H1 (cell line): ENCODE measurements at regions of chr2 and their contacts with region 1.

Region 1: DNA sequence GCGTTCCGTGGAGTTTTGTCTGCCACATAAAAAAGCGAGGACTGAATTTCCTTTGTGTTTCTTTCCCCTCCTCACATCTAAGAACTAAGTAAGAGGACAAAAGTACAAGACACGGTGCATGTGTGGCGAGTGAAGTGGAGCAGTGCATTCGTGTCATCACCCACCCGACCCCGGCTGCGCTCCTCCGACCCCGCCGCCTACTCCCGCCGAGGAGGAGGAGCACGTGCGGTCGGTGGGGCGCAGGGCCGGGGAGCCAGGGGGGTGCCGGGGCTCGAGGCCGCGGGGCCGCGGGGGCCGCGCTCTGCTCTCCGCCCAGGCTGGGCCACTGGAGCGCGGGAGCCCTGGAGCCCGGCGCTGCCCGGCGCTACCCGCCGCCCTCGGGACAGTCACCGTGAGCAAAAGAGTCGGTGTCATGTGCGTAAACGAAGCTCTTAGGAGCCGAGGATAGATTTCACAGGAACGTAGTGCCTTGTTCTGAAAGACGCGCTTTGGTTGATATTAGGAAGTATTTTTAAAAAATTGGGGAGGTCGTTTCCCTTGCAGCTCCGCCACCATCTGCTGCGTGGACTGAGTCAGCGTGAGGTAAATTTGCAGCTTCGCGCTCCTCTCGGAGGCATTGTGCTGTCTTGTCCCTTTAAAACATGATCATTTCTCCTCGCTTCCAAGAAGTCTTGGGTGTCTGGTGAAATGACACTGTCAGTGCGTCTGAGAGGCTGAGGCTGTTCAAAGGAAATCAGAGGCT is 11.0 kb downstream of the TBR1 start:
- DNase-seq: peak in 1 of 2 experiments; percentile 64
- H3K4me3 ChIP-seq: peak overlapping the region; percentile 26 to 54 (median 34); a peak in 6 of 8 replicates
- H3K27ac ChIP-seq: no peak overlapping the region
- H3K4me1 ChIP-seq: peaks cover 0 to 16% (median 4%) of the 10 kb centered on the region in 4 experiments; a peak in 5 of 7 replicates
- H3K27me3 ChIP-seq: peaks cover 68 to 77% (median 73%) of the 10 kb centered on the region in 4 experiments
- CTCF ChIP-seq: peak in 1 of 3 experiments; percentile 41; a peak in 1 of 4 replicates
- EP300 ChIP-seq: no peak
- POLR2A ChIP-seq: no peak
- RAD21 ChIP-seq: no peak; a peak in 1 of 4 replicates

Region 2: GRCh38 chr2:161118722-161119121 is 308.4 kb before region 1 on chr2:
- CTCF ChIA-PET with region 1: no interaction called
- POLR2A ChIA-PET with region 1: no interaction called
- DNase-seq: no peak
- H3K4me3 ChIP-seq: no peak overlapping the region
- H3K27ac ChIP-seq: no peak overlapping the region
- H3K4me1 ChIP-seq: peaks cover 0 to 7% (median 1%) of the 10 kb centered on the region in 4 experiments; a peak in 3 of 7 replicates
- H3K27me3 ChIP-seq: no peaks in the 10 kb centered on the region
- CTCF ChIP-seq: no peak
- EP300 ChIP-seq: no peak
- POLR2A ChIP-seq: no peak
- RAD21 ChIP-seq: no peak

Region 3: GRCh38 chr2:161373942-161374341 is 53.2 kb before region 1 on chr2:
- CTCF ChIA-PET with region 1: no interaction called
- POLR2A ChIA-PET with region 1: no interaction called
- DNase-seq: no peak
- H3K4me3 ChIP-seq: no peak overlapping the region
- H3K27ac ChIP-seq: no peak overlapping the region
- H3K4me1 ChIP-seq: peaks cover 0 to 4% (median 1%) of the 10 kb centered on the region in 4 experiments; a peak in 3 of 7 replicates
- H3K27me3 ChIP-seq: no peaks in the 10 kb centered on the region
- CTCF ChIP-seq: no peak
- EP300 ChIP-seq: no peak
- POLR2A ChIP-seq: no peak
- RAD21 ChIP-seq: no peak

Region 4: DNA sequence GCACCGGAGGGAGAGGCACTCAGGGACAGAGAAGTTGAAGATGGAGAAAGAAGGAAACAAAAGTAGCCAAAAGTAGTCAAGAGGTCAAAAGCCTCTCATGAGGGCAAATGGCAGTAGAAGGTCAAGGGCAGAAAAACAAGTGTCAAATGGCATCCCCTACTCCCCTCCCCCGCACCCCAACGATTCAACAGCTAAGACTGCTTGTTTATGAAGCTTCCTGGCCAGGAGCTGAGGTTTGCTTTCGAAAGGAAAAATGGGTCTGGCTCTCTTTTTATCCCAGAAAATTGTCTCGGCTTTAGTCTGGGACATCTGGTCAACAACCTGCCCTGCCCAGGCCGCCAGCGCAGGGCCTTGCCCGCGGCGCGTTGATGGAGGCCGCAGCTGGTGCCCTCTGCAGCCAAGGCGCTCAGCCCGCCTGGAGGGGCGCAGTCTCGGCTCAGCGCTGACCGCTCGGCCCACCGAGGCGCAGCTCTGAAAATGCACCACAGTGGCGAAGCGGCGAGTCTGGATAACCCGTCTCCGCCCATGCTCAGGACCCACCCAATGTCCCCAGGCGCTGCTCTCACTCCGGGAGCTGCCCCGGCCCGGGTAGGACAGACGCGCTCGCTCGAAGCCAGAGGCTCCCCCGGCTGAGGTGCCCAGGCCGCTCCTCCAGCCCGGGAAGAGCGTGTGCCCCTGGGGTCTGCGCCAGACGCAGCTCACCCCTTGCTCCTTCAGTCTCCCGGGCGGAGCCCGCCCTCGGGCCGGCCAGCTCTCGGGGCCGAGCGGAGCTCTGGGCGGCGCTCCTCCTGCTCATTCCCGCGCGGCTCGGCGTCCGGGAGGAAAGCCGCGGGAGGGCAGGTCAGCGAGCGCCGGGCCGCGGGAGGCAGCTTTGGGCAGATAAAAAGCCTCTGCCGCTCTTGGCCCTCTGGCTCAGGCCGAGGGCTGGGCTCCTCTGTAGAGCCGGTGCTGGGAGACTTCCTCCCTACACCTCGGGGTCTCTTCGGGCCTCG is 12.8 kb before region 1 on chr2:
- CTCF ChIA-PET with region 1: interaction called, 16 read pairs
- POLR2A ChIA-PET with region 1: interaction called, 8 read pairs
- DNase-seq: peak in 1 of 2 experiments; percentile 78
- H3K4me3 ChIP-seq: peak overlapping the region; percentile 17 to 60 (median 44)
- H3K27ac ChIP-seq: no peak overlapping the region
- H3K4me1 ChIP-seq: peaks cover 14 to 27% (median 22%) of the 10 kb centered on the region in 4 experiments
- H3K27me3 ChIP-seq: peaks cover 39 to 65% (median 59%) of the 10 kb centered on the region in 4 experiments
- CTCF ChIP-seq: peak in 2 of 3 experiments; percentile 21 to 29; a peak in 3 of 4 replicates
- EP300 ChIP-seq: no peak
- POLR2A ChIP-seq: no peak
- RAD21 ChIP-seq: no peak; a peak in 1 of 4 replicates

Region 5: GRCh38 chr2:161445097-161445496 is 18.0 kb after region 1 on chr2:
- CTCF ChIA-PET with region 1: no interaction called
- POLR2A ChIA-PET with region 1: no interaction called
- DNase-seq: no peak
- H3K4me3 ChIP-seq: no peak overlapping the region
- H3K27ac ChIP-seq: no peak overlapping the region
- H3K4me1 ChIP-seq: no peaks in the 10 kb centered on the region
- H3K27me3 ChIP-seq: no peaks in the 10 kb centered on the region
- CTCF ChIP-seq: no peak
- EP300 ChIP-seq: no peak
- POLR2A ChIP-seq: no peak
- RAD21 ChIP-seq: no peak